ENCODE measurements at regions of chr1 and their contacts with region 1.

Region 1: DNA sequence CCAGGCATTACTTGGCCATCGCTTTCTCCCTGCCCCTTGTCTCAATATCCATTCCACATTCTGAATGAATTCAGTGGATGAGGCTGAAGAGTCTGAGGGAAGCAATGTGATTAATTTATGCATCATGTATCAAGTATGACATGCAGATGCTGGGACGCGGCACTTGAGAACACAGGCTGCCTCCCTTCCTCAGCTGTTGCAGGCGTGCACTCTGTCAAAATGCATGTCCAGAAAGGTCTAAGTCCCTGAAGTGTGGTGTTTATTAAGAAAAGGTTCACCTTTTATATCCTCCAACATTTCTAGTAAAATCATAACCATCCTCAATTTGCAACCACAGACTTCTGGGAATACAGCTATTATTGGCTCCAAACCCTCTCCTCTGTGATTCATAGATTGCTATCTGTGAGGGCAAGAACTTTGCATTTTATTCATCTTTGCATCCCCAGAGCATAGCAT is 22.6 kb upstream of the RAB3GAP2 start:
- DNase-seq: no peak
- ATAC-seq: no peak
- H3K4me3 ChIP-seq: no peak overlapping the region
- H3K27ac ChIP-seq: no peak overlapping the region
- H3K4me1 ChIP-seq: peaks cover 0 to 3% (median 0%) of the 10 kb centered on the region in 12 donors
- H3K27me3 ChIP-seq: peaks cover 0 to 10% (median 0%) of the 10 kb centered on the region in 9 donors
- CTCF ChIP-seq: no peak
- POLR2A ChIP-seq: no peak

Region 2: GRCh38 chr1:220227393-220227792 is 67.5 kb before region 1 on chr1:
- intact Hi-C with region 1: no loop called
- DNase-seq: no peak
- ATAC-seq: peak in 2 of 4 donors; percentile 34 to 49
- H3K4me3 ChIP-seq: no peak overlapping the region
- H3K27ac ChIP-seq: no peak overlapping the region
- H3K4me1 ChIP-seq: peaks cover 0 to 34% (median 8%) of the 10 kb centered on the region in 12 donors
- H3K27me3 ChIP-seq: no peaks in the 10 kb centered on the region
- CTCF ChIP-seq: no peak
- POLR2A ChIP-seq: no peak

Region 3: DNA sequence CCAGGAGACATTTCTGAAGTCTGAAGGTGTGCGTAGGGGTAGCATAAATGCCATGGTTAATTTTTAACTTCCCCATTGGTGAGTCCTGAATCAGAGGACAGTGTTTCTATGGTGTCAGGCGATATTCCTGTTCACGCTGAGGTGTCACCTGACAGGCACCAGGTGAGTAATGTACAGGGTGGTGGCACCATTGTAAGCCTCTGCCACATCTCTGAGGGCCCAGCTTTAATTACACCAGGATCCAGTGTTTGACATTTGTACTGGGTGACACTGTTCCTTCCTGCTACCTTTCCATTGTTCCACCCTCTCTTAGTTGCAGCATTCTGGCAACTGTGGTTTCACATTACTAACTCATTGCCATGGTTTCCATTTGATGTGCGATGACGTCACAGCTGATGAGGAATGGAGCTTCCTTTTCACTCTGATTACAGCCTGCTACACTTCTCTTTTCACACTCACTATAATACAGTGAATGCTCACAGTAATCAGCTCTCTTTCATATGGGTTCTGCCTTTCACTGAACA is 192.5 kb after region 1 on chr1:
- intact Hi-C with region 1: loop called in 2 of 10 experiments (anchors 5 to 10 kb)
- DNase-seq: no peak
- ATAC-seq: no peak
- H3K4me3 ChIP-seq: no peak overlapping the region
- H3K27ac ChIP-seq: no peak overlapping the region
- H3K4me1 ChIP-seq: peaks cover 0 to 14% (median 0%) of the 10 kb centered on the region in 12 donors
- H3K27me3 ChIP-seq: no peaks in the 10 kb centered on the region
- CTCF ChIP-seq: no peak
- POLR2A ChIP-seq: no peak

Region 4: DNA sequence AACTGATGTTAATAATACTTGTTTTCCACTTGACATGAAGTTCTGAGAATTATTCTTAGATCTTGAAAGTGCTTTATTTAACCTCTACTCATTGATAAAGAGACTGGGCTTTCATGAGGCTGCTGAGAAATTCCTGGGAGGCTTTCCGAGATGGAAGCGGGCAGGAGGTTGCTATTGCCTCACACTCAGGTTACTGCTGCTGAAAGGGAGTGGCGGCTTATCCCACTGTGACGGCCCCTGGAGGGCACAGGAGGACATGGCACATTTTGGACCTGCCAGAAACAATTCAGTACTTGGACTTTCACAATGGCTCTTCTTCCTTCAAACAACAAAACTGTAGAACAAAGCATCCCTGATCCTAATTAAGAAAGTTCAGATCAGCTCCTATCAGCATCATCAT is 216.9 kb after region 1 on chr1:
- intact Hi-C with region 1: loop called in 3 of 10 experiments (anchors 5 to 10 kb)
- DNase-seq: peak in 3 of 5 donors; percentile 14 to 47 (median 27)
- ATAC-seq: peak in 2 of 4 donors; percentile 67 to 76
- H3K4me3 ChIP-seq: no peak overlapping the region
- H3K27ac ChIP-seq: no peak overlapping the region
- H3K4me1 ChIP-seq: peaks cover 0 to 8% (median 0%) of the 10 kb centered on the region in 12 donors
- H3K27me3 ChIP-seq: peaks cover 0 to 5% (median 0%) of the 10 kb centered on the region in 9 donors
- CTCF ChIP-seq: peak in 4 of 12 donors; percentile 27 to 40 (median 29)
- POLR2A ChIP-seq: no peak

Region 5: GRCh38 chr1:220527908-220528678 is 233.2 kb after region 1 on chr1 and contains the start of gene MARK1:
- intact Hi-C with region 1: loop called in 5 of 10 experiments (anchors 5 to 10 kb)
- DNase-seq: peak; percentile 83 to 90 (median 88)
- ATAC-seq: peak; percentile 92 to 96 (median 93)
- H3K4me3 ChIP-seq: peak within 1 kb of the TSS; percentile 73 to 95 (median 88)
- H3K27ac ChIP-seq: peak within 1 kb of the TSS; percentile 73 to 95 (median 88)
- H3K4me1 ChIP-seq: peaks cover 0 to 26% (median 6%) of the 10 kb centered on the region in 12 donors
- H3K27me3 ChIP-seq: peaks cover 0 to 56% (median 0%) of the 10 kb centered on the region in 9 donors
- CTCF ChIP-seq: no peak
- POLR2A ChIP-seq: peak in 1 of 2 donors; percentile 10
- total RNA-seq, gene MARK1: 12.1 to 25.1 (median 16.7) TPM

Region 6: GRCh38 chr1:220733090-220733601 is 438.3 kb after region 1 on chr1:
- intact Hi-C with region 1: loop called in 1 of 10 experiments (anchors 10 kb)
- DNase-seq: peak; percentile 73 to 86 (median 82)
- ATAC-seq: peak; percentile 92 to 96 (median 96)
- H3K4me3 ChIP-seq: peak overlapping the region in 10 of 12 donors; percentile 10 to 50 (median 38)
- H3K27ac ChIP-seq: peak overlapping the region; percentile 54 to 89 (median 79)
- H3K4me1 ChIP-seq: peaks cover 0 to 21% (median 5%) of the 10 kb centered on the region in 12 donors
- H3K27me3 ChIP-seq: no peaks in the 10 kb centered on the region
- CTCF ChIP-seq: peak; percentile 68 to 95 (median 88)
- POLR2A ChIP-seq: no peak

Region 7: DNA sequence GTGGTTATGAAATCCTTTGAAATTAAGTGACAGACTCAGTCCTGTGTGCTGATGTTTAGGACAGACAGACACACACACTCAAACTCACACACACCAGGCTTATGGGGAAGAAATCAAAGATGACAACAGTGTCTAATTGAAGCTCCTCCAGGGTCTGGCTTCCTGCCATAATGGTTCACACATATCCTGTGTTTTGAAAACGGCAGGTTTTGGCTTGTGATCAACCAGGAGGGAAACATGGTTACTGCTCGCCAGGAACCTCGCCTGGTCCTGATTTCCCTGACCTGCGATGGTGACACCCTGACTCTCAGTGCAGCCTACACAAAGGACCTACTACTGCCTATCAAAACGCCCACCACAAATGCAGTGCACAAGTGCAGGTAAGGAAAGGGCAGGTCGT is 496.4 kb after region 1 on chr1:
- intact Hi-C with region 1: loop called in 1 of 10 experiments (anchors 10 kb)
- DNase-seq: peak in 3 of 5 donors; percentile 31 to 48 (median 43)
- ATAC-seq: peak in 1 of 4 donors; percentile 20
- H3K4me3 ChIP-seq: no peak overlapping the region
- H3K27ac ChIP-seq: peak overlapping the region in 9 of 12 donors; percentile 18 to 54 (median 34)
- H3K4me1 ChIP-seq: peaks cover 0 to 41% (median 20%) of the 10 kb centered on the region in 12 donors
- H3K27me3 ChIP-seq: peaks cover 0 to 6% (median 0%) of the 10 kb centered on the region in 9 donors
- CTCF ChIP-seq: no peak
- POLR2A ChIP-seq: no peak

Measured in heart left ventricle (tissue), 16 donors.